A673 (cell line): ENCODE measurements at regions of chr13 and their contacts with region 1.

Region 1: DNA sequence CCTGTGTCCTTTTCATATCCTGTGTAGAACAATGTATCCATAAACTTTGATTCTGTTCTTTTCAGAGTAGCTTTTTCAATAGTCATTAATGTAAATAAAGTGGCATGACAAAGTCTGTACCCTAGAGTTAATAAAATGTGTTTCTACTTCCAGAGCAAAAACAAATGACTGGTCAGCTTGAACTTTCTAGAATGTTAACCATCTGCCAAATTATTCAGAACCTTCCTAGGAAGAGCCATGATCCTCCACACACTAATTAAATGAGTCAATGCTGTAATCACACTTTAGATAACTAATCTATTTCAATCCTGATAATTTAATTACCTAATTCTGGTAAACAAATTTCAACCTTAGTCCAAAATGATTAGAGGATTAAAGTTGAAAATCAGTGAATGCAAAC is 73.2 kb downstream of the DIAPH3 start:
- DNase-seq: no peak
- H3K4me3 ChIP-seq: no peak overlapping the region
- H3K27ac ChIP-seq: no peak overlapping the region
- H3K4me1 ChIP-seq: peaks cover 32% of the 10 kb centered on the region
- H3K27me3 ChIP-seq: no peaks in the 10 kb centered on the region
- CTCF ChIP-seq: no peak

Region 2: DNA sequence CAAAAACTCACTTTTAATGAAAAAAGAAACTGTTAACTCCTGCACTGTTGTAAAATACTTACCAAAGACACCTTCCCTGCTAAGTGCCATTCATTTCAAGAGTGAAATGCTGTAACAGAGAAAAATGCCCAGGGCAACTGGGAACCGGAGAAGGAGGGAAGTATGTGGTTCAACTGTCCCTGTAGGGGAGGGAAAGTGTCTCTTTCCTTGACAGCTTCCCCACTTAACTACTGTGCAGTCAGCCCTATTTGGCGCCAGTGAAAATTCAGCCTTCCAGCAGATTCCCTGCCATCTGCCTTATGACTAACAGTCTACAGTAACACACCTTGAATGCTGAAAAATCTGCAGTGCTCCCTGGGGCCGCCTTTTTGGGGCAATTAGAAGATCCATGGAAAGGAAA is 715.9 kb before region 1 on chr13:
- CTCF ChIA-PET with region 1: no interaction called
- POLR2A ChIA-PET with region 1: no interaction called
- intact Hi-C with region 1: no loop called
- DNase-seq: no peak
- H3K4me3 ChIP-seq: no peak overlapping the region
- H3K27ac ChIP-seq: no peak overlapping the region
- H3K4me1 ChIP-seq: no peaks in the 10 kb centered on the region
- H3K27me3 ChIP-seq: no peaks in the 10 kb centered on the region
- CTCF ChIP-seq: no peak

Region 3: GRCh38 chr13:59771272-59771671 is 319.3 kb before region 1 on chr13:
- CTCF ChIA-PET with region 1: no interaction called
- POLR2A ChIA-PET with region 1: no interaction called
- intact Hi-C with region 1: loop called (anchors 5 kb)
- DNase-seq: peak; percentile 73
- H3K4me3 ChIP-seq: no peak overlapping the region
- H3K27ac ChIP-seq: peak overlapping the region; percentile 70
- H3K4me1 ChIP-seq: peaks cover 83% of the 10 kb centered on the region
- H3K27me3 ChIP-seq: no peaks in the 10 kb centered on the region
- CTCF ChIP-seq: peak; percentile 80

Region 4: DNA sequence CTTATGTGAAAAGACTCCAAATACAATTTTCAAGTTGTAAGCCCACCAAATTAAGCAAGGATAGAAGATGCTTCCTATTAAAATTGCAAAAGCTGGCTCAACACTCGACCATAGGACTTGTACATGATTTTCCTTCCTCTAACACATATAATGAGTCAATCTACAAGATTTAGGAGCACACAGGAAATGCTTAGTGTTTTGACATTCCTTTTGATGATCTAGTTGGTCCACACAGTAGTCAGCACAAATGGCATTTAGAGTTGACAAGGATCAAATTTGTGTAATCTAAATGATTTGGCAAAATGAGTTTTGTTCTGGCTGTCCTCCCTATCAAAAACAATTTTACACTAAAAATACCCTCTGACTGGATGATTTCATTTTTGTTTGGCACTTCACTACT is 267.1 kb before region 1 on chr13:
- CTCF ChIA-PET with region 1: no interaction called
- POLR2A ChIA-PET with region 1: no interaction called
- intact Hi-C with region 1: loop called (anchors 5 kb)
- DNase-seq: peak; percentile 85
- H3K4me3 ChIP-seq: no peak overlapping the region
- H3K27ac ChIP-seq: peak overlapping the region; percentile 57
- H3K4me1 ChIP-seq: peaks cover 19% of the 10 kb centered on the region
- H3K27me3 ChIP-seq: no peaks in the 10 kb centered on the region
- CTCF ChIP-seq: no peak

Region 5: GRCh38 chr13:59906413-59907049 is 184.0 kb before region 1 on chr13:
- CTCF ChIA-PET with region 1: no interaction called
- POLR2A ChIA-PET with region 1: no interaction called
- intact Hi-C with region 1: loop called (anchors 5 kb)
- DNase-seq: peak; percentile 75
- H3K4me3 ChIP-seq: no peak overlapping the region
- H3K27ac ChIP-seq: peak overlapping the region; percentile 64
- H3K4me1 ChIP-seq: peaks cover 32% of the 10 kb centered on the region
- H3K27me3 ChIP-seq: no peaks in the 10 kb centered on the region
- CTCF ChIP-seq: peak; percentile 79

Region 6: GRCh38 chr13:59960683-59961082 is 129.9 kb before region 1 on chr13:
- CTCF ChIA-PET with region 1: no interaction called
- POLR2A ChIA-PET with region 1: no interaction called
- intact Hi-C with region 1: loop called (anchors 5 kb)
- DNase-seq: no peak
- H3K4me3 ChIP-seq: no peak overlapping the region
- H3K27ac ChIP-seq: peak overlapping the region; percentile 49
- H3K4me1 ChIP-seq: peaks cover 55% of the 10 kb centered on the region
- H3K27me3 ChIP-seq: no peaks in the 10 kb centered on the region
- CTCF ChIP-seq: no peak

Region 7: GRCh38 chr13:60108589-60108988 is 18.0 kb after region 1 on chr13:
- CTCF ChIA-PET with region 1: no interaction called
- POLR2A ChIA-PET with region 1: no interaction called
- intact Hi-C with region 1: no loop called
- DNase-seq: no peak
- H3K4me3 ChIP-seq: no peak overlapping the region
- H3K27ac ChIP-seq: no peak overlapping the region
- H3K4me1 ChIP-seq: peaks cover 48% of the 10 kb centered on the region
- H3K27me3 ChIP-seq: no peaks in the 10 kb centered on the region
- CTCF ChIP-seq: no peak

Region 8: DNA sequence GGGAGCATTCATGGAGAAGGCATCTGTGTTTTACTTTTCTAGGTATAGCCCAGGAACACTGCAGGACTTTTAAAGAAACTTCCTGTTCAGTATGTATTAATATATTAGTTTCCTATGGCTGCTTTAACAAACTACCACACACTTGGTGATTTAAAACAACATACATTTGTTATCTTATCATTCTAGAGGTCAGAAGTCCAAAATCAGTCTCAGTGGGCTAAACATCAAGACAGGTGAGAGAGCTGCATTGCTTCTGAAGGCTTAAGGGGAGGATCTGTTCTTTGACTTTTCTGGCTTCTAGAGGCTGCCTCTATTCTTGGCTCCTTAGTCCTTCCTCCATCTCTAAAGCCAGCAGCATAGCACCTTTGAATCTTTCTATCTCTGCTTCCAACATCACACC is 110.7 kb after region 1 on chr13:
- CTCF ChIA-PET with region 1: no interaction called
- POLR2A ChIA-PET with region 1: no interaction called
- intact Hi-C with region 1: no loop called
- DNase-seq: no peak
- H3K4me3 ChIP-seq: no peak overlapping the region
- H3K27ac ChIP-seq: no peak overlapping the region
- H3K4me1 ChIP-seq: no peaks in the 10 kb centered on the region
- H3K27me3 ChIP-seq: no peaks in the 10 kb centered on the region
- CTCF ChIP-seq: no peak

Region 9: GRCh38 chr13:60661521-60661920 is 570.9 kb after region 1 on chr13:
- CTCF ChIA-PET with region 1: no interaction called
- POLR2A ChIA-PET with region 1: no interaction called
- intact Hi-C with region 1: no loop called
- DNase-seq: peak; percentile 40
- H3K4me3 ChIP-seq: no peak overlapping the region
- H3K27ac ChIP-seq: no peak overlapping the region
- H3K4me1 ChIP-seq: no peaks in the 10 kb centered on the region
- H3K27me3 ChIP-seq: no peaks in the 10 kb centered on the region
- CTCF ChIP-seq: no peak